Activated B cell treated with CpG ODN at 0.5 μM for 24 hours (primary cell): ENCODE measurements at regions of chr17 and their contacts with region 1.

Region 1: GRCh38 chr17:10295728-10296343 is 77.0 kb downstream of the MYH13 start:
- DNase-seq: no peak
- ATAC-seq: peak; percentile 49
- H3K4me3 Mint-ChIP-seq: no peak overlapping the region
- H3K27ac Mint-ChIP-seq: no peak overlapping the region
- H3K4me1 Mint-ChIP-seq: peaks cover 8% of the 10 kb centered on the region
- H3K27me3 Mint-ChIP-seq: peaks cover 10% of the 10 kb centered on the region
- CTCF ChIP-seq: no peak

Region 2: GRCh38 chr17:9959377-9959981 is 336.4 kb before region 1 on chr17:
- CTCF ChIA-PET with region 1: no interaction called
- POLR2A ChIA-PET with region 1: no interaction called
- intact Hi-C with region 1: loop called (anchors 2 kb)
- DNase-seq: no peak
- ATAC-seq: no peak
- H3K4me3 Mint-ChIP-seq: no peak overlapping the region
- H3K27ac Mint-ChIP-seq: no peak overlapping the region
- H3K4me1 Mint-ChIP-seq: no peaks in the 10 kb centered on the region
- H3K27me3 Mint-ChIP-seq: peaks cover 7% of the 10 kb centered on the region
- CTCF ChIP-seq: no peak

Region 3: GRCh38 chr17:10210151-10210930 is 85.5 kb before region 1 on chr17:
- CTCF ChIA-PET with region 1: no interaction called
- POLR2A ChIA-PET with region 1: no interaction called
- intact Hi-C with region 1: no loop called
- DNase-seq: no peak
- ATAC-seq: no peak
- H3K4me3 Mint-ChIP-seq: no peak overlapping the region
- H3K27ac Mint-ChIP-seq: no peak overlapping the region
- H3K4me1 Mint-ChIP-seq: no peaks in the 10 kb centered on the region
- H3K27me3 Mint-ChIP-seq: no peaks in the 10 kb centered on the region
- CTCF ChIP-seq: no peak

Region 4: DNA sequence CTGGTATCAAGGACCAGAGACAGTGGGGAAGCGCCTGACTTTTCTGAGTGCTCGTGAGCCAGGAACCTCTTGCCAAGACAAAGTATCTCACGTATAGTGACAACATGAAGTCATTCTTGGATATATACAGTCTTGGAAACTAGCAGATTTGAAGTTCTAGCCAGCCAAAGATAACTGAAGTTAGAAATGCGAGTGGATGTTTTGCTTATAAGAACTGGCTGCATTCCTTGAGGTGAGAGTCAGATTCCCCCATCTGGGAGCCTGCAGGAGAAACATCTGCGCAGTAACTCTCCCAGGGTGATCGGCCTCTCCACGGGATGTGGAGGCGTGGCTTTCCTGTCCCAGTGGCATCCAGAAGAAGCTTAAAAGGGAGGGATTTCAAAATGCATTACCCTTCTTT is 1035.0 kb after region 1 on chr17:
- CTCF ChIA-PET with region 1: no interaction called
- POLR2A ChIA-PET with region 1: no interaction called
- intact Hi-C with region 1: no loop called
- DNase-seq: no peak
- ATAC-seq: no peak
- H3K4me3 Mint-ChIP-seq: no peak overlapping the region
- H3K27ac Mint-ChIP-seq: no peak overlapping the region
- H3K4me1 Mint-ChIP-seq: no peaks in the 10 kb centered on the region
- H3K27me3 Mint-ChIP-seq: no peaks in the 10 kb centered on the region
- CTCF ChIP-seq: no peak